Activated T-helper 2 cell treated with anti-CD3 and anti-CD28 coated beads, Interferon-gamma antibody, Interleukin-2, Interleukin-4, amounts not matched to agents 10 μg/mL and 5 μg/mL and 100 μg/mL, durations not matched to agents 14 hours and 24 hours and 36 hours (primary cell): ENCODE measurements at regions of chr11 and their contacts with region 1.

Region 1: GRCh38 chr11:4947505-4947904 is at the start of gene OR51A4:
- DNase-seq: no peak
- H3K4me3 Mint-ChIP-seq: no peak within 1 kb of the TSS
- H3K27ac Mint-ChIP-seq: no peak within 1 kb of the TSS
- H3K4me1 Mint-ChIP-seq: no peaks in the 10 kb centered on the region
- H3K27me3 Mint-ChIP-seq: no peaks in the 10 kb centered on the region
- total RNA-seq, gene OR51A4: not detected in 2 replicates

Region 2: GRCh38 chr11:4960877-4961276 is 13.4 kb after region 1 on chr11:
- intact Hi-C with region 1: loop called (anchors 1 kb)
- DNase-seq: no peak
- H3K4me3 Mint-ChIP-seq: no peak overlapping the region
- H3K27ac Mint-ChIP-seq: no peak overlapping the region
- H3K4me1 Mint-ChIP-seq: no peaks in the 10 kb centered on the region
- H3K27me3 Mint-ChIP-seq: no peaks in the 10 kb centered on the region

Region 3: DNA sequence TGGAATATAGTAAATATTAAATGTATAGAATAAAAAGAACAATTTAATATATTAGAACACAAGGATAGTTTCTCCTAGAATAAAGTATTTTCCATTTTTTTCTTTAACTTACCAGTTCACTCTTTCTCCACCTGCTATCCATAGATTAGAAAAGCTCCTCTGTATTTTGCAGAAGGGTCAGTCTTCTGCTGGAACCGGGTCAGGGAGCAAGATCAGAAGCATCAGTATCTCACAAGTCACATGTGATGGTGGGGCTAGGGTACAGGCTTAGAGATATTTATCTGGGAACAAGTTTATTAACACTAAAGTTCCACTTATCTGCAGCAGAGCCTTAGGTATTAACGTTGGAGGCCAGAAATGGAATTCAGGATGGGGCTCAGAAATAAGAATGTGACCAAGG is 224.4 kb after region 1 on chr11:
- intact Hi-C with region 1: no loop called
- DNase-seq: no peak
- H3K4me3 Mint-ChIP-seq: no peak overlapping the region
- H3K27ac Mint-ChIP-seq: no peak overlapping the region
- H3K4me1 Mint-ChIP-seq: no peaks in the 10 kb centered on the region
- H3K27me3 Mint-ChIP-seq: no peaks in the 10 kb centered on the region